Sciatic nerve (tissue), 2 donors: ENCODE measurements at regions of chr6 and their contacts with region 1.

Region 1: GRCh38 chr6:37169496-37170272 is at the start of gene PIM1:
- DNase-seq: peak; percentile 99
- ATAC-seq: peak; percentile 93
- total RNA-seq, gene PIM1: 50.9 TPM

Region 2: GRCh38 chr6:37051138-37052026 is 118.3 kb before region 1 on chr6:
- intact Hi-C with region 1: loop called (anchors 5 kb)
- DNase-seq: peak; percentile 95
- ATAC-seq: peak; percentile 88

Region 3: GRCh38 chr6:37092923-37093920 is 76.5 kb before region 1 on chr6:
- intact Hi-C with region 1: no loop called
- DNase-seq: peak; percentile 62
- ATAC-seq: peak; percentile 61

Region 4: GRCh38 chr6:37222125-37222967 is 52.7 kb after region 1 on chr6:
- intact Hi-C with region 1: no loop called
- DNase-seq: peak; percentile 75
- ATAC-seq: peak; percentile 93